Psoas muscle (tissue), 8 donors: ENCODE measurements at regions of chr19 and their contacts with region 1.

Region 1: GRCh38 chr19:18281082-18282020 is at the start of gene JUND:
- DNase-seq: peak; percentile 98 to 99
- ATAC-seq: peak; percentile 76 to 81 (median 79)
- H3K4me3 ChIP-seq: peak within 1 kb of the TSS; percentile 84
- H3K27ac ChIP-seq: peak within 1 kb of the TSS; percentile 100
- H3K4me1 ChIP-seq: peaks cover 37% of the 10 kb centered on the region
- H3K27me3 ChIP-seq: no peaks in the 10 kb centered on the region
- CTCF ChIP-seq: no peak
- total RNA-seq, gene JUND: 68.0 to 77.1 (median 72.1) TPM

Region 2: GRCh38 chr19:18301718-18302111 is 20.4 kb after region 1 on chr19:
- intact Hi-C with region 1: loop called in 1 of 2 experiments (anchors 2 kb)
- DNase-seq: no peak
- ATAC-seq: no peak
- H3K4me3 ChIP-seq: no peak overlapping the region
- H3K27ac ChIP-seq: peak overlapping the region; percentile 95
- H3K4me1 ChIP-seq: peaks cover 56% of the 10 kb centered on the region
- H3K27me3 ChIP-seq: no peaks in the 10 kb centered on the region
- CTCF ChIP-seq: no peak

Region 3: GRCh38 chr19:18322759-18323460 is 41.6 kb after region 1 on chr19 and contains the start of gene LSM4:
- intact Hi-C with region 1: loop called (anchors 1 kb)
- DNase-seq: peak; percentile 99
- ATAC-seq: peak; percentile 93 to 97 (median 96)
- H3K4me3 ChIP-seq: peak within 1 kb of the TSS; percentile 85
- H3K27ac ChIP-seq: peak within 1 kb of the TSS; percentile 89
- H3K4me1 ChIP-seq: peaks cover 38% of the 10 kb centered on the region
- H3K27me3 ChIP-seq: no peaks in the 10 kb centered on the region
- CTCF ChIP-seq: peak; percentile 25
- total RNA-seq, gene LSM4: 87.9 to 136 (median 112) TPM

Region 4: GRCh38 chr19:18428787-18429674 is 147.7 kb after region 1 on chr19:
- intact Hi-C with region 1: no loop called
- DNase-seq: peak; percentile 70 to 83
- ATAC-seq: peak in 2 of 4 donors; percentile 11 to 12
- H3K4me3 ChIP-seq: peak overlapping the region; percentile 41
- H3K27ac ChIP-seq: no peak overlapping the region
- H3K4me1 ChIP-seq: peaks cover 30% of the 10 kb centered on the region
- H3K27me3 ChIP-seq: peaks cover 0 to 5% (median 0%) of the 10 kb centered on the region in 3 donors
- CTCF ChIP-seq: no peak